ENCODE measurements at regions of chr3 and their contacts with region 1.

Region 1: GRCh38 chr3:4712143-4712542 is 219.0 kb downstream of the ITPR1 start:
- DNase-seq: no peak
- H3K4me3 ChIP-seq: no peak overlapping the region
- H3K27ac ChIP-seq: no peak overlapping the region
- H3K4me1 ChIP-seq: peaks cover 13% of the 10 kb centered on the region
- H3K27me3 ChIP-seq: no peaks in the 10 kb centered on the region
- CTCF ChIP-seq: no peak

Region 2: DNA sequence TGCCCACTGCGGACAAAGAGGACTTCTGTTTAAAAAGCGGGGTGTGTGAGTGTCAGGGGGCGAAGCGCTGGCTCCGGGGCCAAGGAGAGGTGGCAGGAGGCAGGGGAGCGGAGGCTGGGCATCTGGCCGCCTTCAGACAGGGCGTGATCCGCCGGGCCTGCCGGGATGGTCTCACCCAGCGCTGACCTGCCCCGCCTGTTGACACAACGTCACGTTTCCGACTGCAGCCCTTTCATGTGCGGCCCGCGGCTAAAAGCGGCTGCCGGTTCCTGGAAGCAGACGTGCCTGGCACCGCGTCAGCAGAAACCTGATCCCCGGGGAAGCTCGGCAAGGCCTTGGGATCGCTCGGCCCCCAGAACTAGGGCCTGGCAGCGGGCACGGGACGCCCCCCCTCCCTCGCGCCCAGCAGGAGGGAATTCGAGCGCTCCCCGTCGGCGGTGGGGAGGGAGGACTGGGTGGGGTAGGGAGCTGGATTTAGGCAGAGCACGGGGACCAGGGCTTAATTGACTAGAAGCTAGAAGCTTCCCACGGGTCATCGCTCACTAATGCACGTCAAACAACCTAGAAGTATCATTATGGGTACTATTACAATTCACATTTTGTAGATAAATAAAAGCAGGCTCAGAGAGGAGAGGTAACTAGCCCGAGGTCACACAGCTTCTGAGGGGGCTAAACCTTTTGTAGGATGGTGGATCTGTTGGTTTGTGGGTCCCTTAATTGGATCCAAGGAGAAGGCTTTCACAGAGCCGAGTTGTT is 274.8 kb after region 1 on chr3:
- intact Hi-C with region 1: loop called (anchors 10 kb)
- DNase-seq: peak; percentile 97
- H3K4me3 ChIP-seq: peak overlapping the region; percentile 98
- H3K27ac ChIP-seq: peak overlapping the region; percentile 100
- H3K4me1 ChIP-seq: peaks cover 77% of the 10 kb centered on the region
- H3K27me3 ChIP-seq: no peaks in the 10 kb centered on the region
- CTCF ChIP-seq: no peak

Region 3: GRCh38 chr3:5035692-5036391 is 323.7 kb after region 1 on chr3:
- intact Hi-C with region 1: loop called (anchors 5 kb)
- DNase-seq: no peak
- H3K4me3 ChIP-seq: no peak overlapping the region
- H3K27ac ChIP-seq: no peak overlapping the region
- H3K4me1 ChIP-seq: no peaks in the 10 kb centered on the region
- H3K27me3 ChIP-seq: no peaks in the 10 kb centered on the region
- CTCF ChIP-seq: no peak

Region 4: DNA sequence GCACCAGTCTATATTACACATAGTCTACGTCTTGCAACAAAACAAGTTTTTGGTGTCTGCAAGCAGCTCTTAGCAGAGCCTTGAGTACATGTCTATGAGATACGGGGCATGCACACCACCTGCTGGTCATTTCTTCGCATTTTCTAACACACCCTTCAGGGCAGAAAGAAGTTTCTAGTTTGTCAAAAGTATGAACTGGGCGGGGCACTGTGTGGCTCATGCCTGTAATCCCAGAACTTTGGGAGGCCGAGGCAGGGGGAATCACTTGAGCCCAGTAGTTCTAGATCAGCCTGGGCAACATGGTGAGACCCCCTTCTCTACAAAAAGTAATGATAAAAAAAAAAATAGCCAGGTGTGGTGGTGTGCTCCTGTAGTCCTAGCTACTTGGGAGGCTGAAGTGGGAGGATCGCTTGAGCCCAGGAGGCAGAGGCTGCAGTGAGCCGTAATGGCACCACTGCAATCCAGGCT is 345.7 kb after region 1 on chr3:
- intact Hi-C with region 1: loop called (anchors 2 kb)
- DNase-seq: peak; percentile 74
- H3K4me3 ChIP-seq: no peak overlapping the region
- H3K27ac ChIP-seq: no peak overlapping the region
- H3K4me1 ChIP-seq: peaks cover 19% of the 10 kb centered on the region
- H3K27me3 ChIP-seq: peaks cover 10% of the 10 kb centered on the region
- CTCF ChIP-seq: peak; percentile 81